ENCODE measurements at regions of chr1 and their contacts with region 1.

Region 1: GRCh38 chr1:154145986-154146385 is 8.9 kb downstream of the NUP210L start:
- DNase-seq: no peak
- ATAC-seq: no peak
- H3K4me3 ChIP-seq: no peak overlapping the region
- H3K27ac ChIP-seq: no peak overlapping the region
- H3K4me1 ChIP-seq: 0 out of 2 replicates have a peak, but pooled peaks cover 1% of the 10 kb centered on the region
- H3K27me3 ChIP-seq: no peaks in the 10 kb centered on the region
- CTCF ChIP-seq: peak; percentile 35; the same call in 1 of the 2 replicates
- POLR2A ChIP-seq: no peak
- RAD21 ChIP-seq: no peak

Region 2: DNA sequence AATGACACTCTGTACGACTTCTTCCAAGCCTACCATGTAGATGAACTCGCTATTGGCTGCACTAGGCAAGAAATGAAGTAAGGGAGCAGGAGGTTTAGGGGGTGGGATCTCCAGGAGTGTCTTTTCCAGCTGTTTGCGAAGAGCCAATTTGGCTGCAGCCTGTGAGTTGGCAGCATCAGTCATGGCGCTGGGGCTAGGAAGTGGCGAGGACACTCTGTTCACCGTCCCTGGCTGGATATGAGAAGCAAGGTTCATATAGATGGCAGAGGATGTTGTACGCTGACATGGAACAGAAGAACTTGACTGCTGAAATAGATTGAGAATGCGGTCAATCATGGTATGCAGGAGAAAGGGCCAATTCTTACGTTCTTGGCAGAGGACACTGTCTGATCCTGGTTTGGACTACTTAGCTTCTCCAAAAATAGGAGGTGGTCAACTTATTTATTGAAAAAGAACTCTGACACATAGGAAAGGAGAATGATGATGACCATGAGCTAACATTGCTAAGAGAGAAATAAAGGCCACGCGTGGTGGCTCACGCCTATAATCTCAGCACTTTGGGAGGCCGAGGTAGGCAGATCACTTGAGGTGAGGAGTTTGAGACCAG is 329.6 kb before region 1 on chr1:
- CTCF ChIA-PET with region 1: no interaction called
- POLR2A ChIA-PET with region 1: no interaction called
- dilution Hi-C with region 1: no loop called
- in situ Hi-C with region 1: no loop called
- intact Hi-C with region 1: no loop called
- DNase-seq: no peak
- ATAC-seq: no peak
- H3K4me3 ChIP-seq: no peak overlapping the region
- H3K27ac ChIP-seq: no peak overlapping the region
- H3K4me1 ChIP-seq: no peaks in the 10 kb centered on the region
- H3K27me3 ChIP-seq: no peaks in the 10 kb centered on the region
- CTCF ChIP-seq: no peak
- POLR2A ChIP-seq: no peak
- RAD21 ChIP-seq: no peak

Region 3: GRCh38 chr1:154014154-154014910 is 131.7 kb before region 1 on chr1:
- CTCF ChIA-PET with region 1: no interaction called
- POLR2A ChIA-PET with region 1: no interaction called
- dilution Hi-C with region 1: no loop called
- in situ Hi-C with region 1: loop called (anchors 10 kb)
- intact Hi-C with region 1: no loop called
- DNase-seq: peak; percentile 76
- ATAC-seq: peak; percentile 88
- H3K4me3 ChIP-seq: no peak overlapping the region
- H3K27ac ChIP-seq: no peak overlapping the region
- H3K4me1 ChIP-seq: no peaks in the 10 kb centered on the region
- H3K27me3 ChIP-seq: no peaks in the 10 kb centered on the region
- CTCF ChIP-seq: no peak
- POLR2A ChIP-seq: no peak
- RAD21 ChIP-seq: no peak

Region 4: GRCh38 chr1:154075746-154076145 is 70.2 kb before region 1 on chr1:
- CTCF ChIA-PET with region 1: no interaction called
- POLR2A ChIA-PET with region 1: no interaction called
- dilution Hi-C with region 1: no loop called
- in situ Hi-C with region 1: no loop called
- intact Hi-C with region 1: loop called (anchors 10 kb)
- DNase-seq: no peak
- ATAC-seq: no peak
- H3K4me3 ChIP-seq: no peak overlapping the region
- H3K27ac ChIP-seq: no peak overlapping the region
- H3K4me1 ChIP-seq: no peaks in the 10 kb centered on the region
- H3K27me3 ChIP-seq: no peaks in the 10 kb centered on the region
- CTCF ChIP-seq: no peak
- POLR2A ChIP-seq: no peak
- RAD21 ChIP-seq: no peak